Lower leg skin (tissue), 4 donors: ENCODE measurements at regions of chr4 and their contacts with region 1.

Region 1: DNA sequence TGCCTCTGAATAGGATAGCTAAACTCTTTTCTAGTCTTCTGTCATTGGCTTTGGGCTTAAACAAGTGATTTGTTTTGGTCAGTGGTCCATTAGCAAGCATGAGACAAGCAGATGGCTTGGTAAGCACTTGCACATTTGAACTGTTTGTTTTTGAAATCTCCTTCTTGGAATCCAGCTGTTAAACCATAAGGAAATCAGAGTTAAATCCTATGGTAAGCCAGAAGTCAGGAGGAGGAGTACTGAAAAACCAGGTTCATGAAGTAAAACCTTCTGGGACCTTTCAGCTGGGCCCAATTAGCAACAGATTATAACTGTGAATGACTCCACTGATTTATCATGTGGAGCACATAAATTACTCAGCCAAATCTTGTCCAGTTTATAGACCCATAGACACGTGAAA is 1042.5 kb upstream of the PABPC4L start:
- DNase-seq: no peak
- H3K4me3 ChIP-seq: no peak overlapping the region
- CTCF ChIP-seq: no peak
- POLR2A ChIP-seq: no peak

Region 2: GRCh38 chr4:134201216-134202098 is 1042.6 kb before region 1 on chr4 and contains the start of gene PABPC4L:
- intact Hi-C with region 1: no loop called
- DNase-seq: peak in 1 of 2 donors; percentile 83
- H3K4me3 ChIP-seq: peak within 1 kb of the TSS; percentile 27
- CTCF ChIP-seq: no peak
- POLR2A ChIP-seq: no peak
- total RNA-seq, gene PABPC4L: 0.29 to 0.54 (median 0.42) TPM in 3 of 4 donors, not detected in the other

Region 3: GRCh38 chr4:135177321-135177720 is 66.7 kb before region 1 on chr4:
- intact Hi-C with region 1: loop called (anchors 2 kb)
- DNase-seq: no peak
- H3K4me3 ChIP-seq: no peak overlapping the region
- CTCF ChIP-seq: no peak
- POLR2A ChIP-seq: no peak

Region 4: GRCh38 chr4:135256111-135256510 is 12.1 kb after region 1 on chr4:
- intact Hi-C with region 1: no loop called
- DNase-seq: no peak
- H3K4me3 ChIP-seq: no peak overlapping the region
- CTCF ChIP-seq: no peak
- POLR2A ChIP-seq: no peak